ENCODE measurements at regions of chr6 and their contacts with region 1.

Region 1: GRCh38 chr6:136643850-136644596 is 93.8 kb upstream of the MAP7 start:
- DNase-seq: peak; percentile 94
- H3K4me3 Mint-ChIP-seq: no peak overlapping the region
- H3K27ac Mint-ChIP-seq: peak overlapping the region; percentile 16
- H3K4me1 Mint-ChIP-seq: peaks cover 6% of the 10 kb centered on the region
- H3K27me3 Mint-ChIP-seq: no peaks in the 10 kb centered on the region
- CTCF ChIP-seq: peak; percentile 73

Region 2: GRCh38 chr6:136607932-136608772 is 35.9 kb before region 1 on chr6:
- CTCF ChIA-PET with region 1: interaction called, 15 read pairs
- POLR2A ChIA-PET with region 1: interaction called, 3 read pairs
- intact Hi-C with region 1: loop called (anchors 1 kb)
- DNase-seq: peak; percentile 91
- H3K4me3 Mint-ChIP-seq: peak overlapping the region; percentile 11
- H3K27ac Mint-ChIP-seq: peak overlapping the region; percentile 94
- H3K4me1 Mint-ChIP-seq: peaks cover 37% of the 10 kb centered on the region
- H3K27me3 Mint-ChIP-seq: no peaks in the 10 kb centered on the region
- CTCF ChIP-seq: peak; percentile 67

Region 3: GRCh38 chr6:136657666-136658065 is 13.6 kb after region 1 on chr6:
- CTCF ChIA-PET with region 1: interaction called, 13 read pairs
- POLR2A ChIA-PET with region 1: interaction called, 7 read pairs
- intact Hi-C with region 1: no loop called
- DNase-seq: no peak
- H3K4me3 Mint-ChIP-seq: no peak overlapping the region
- H3K27ac Mint-ChIP-seq: no peak overlapping the region
- H3K4me1 Mint-ChIP-seq: peaks cover 12% of the 10 kb centered on the region
- H3K27me3 Mint-ChIP-seq: no peaks in the 10 kb centered on the region
- CTCF ChIP-seq: no peak

Region 4: GRCh38 chr6:136685540-136686108 is 41.6 kb after region 1 on chr6:
- CTCF ChIA-PET with region 1: interaction called, 11 read pairs
- POLR2A ChIA-PET with region 1: interaction called, 6 read pairs
- intact Hi-C with region 1: no loop called
- DNase-seq: peak; percentile 82
- H3K4me3 Mint-ChIP-seq: no peak overlapping the region
- H3K27ac Mint-ChIP-seq: no peak overlapping the region
- H3K4me1 Mint-ChIP-seq: peaks cover 13% of the 10 kb centered on the region
- H3K27me3 Mint-ChIP-seq: no peaks in the 10 kb centered on the region
- CTCF ChIP-seq: no peak

Region 5: DNA sequence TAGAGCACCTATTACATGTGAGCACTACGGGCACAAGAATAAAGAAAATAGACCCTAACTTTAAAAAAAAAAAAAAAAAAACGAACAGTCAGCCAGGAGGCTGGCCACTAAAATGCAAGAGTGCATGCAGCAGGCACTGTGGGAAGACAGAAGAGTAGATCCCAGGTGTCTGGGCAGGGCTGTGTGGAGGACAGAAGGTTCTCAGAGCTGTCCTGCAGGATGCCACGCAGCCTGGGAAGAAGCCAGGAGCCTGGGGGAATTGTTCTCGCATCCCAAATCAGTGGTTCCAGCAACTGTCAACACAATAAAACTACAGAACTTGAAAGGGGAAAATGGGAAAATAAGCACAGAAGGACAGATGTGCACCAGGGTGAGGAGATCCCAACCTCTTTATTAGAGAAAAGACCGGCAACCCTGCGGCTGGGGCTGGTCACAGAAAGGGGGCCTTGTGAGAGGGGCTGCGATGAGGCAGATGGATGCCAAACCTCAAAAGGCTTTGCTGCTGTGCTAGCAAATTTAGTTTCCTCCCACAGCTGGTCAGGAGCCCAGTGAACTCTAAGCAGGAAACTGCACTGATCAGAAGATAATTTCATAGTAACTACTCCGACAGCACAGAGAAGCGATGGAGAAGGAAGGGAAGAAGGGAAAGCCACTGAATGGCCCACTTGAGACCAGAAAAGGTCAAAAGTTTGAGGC is 117.4 kb after region 1 on chr6:
- CTCF ChIA-PET with region 1: interaction called, 11 read pairs
- POLR2A ChIA-PET with region 1: no interaction called
- intact Hi-C with region 1: no loop called
- DNase-seq: no peak
- H3K4me3 Mint-ChIP-seq: peak overlapping the region; percentile 17
- H3K27ac Mint-ChIP-seq: peak overlapping the region; percentile 32
- H3K4me1 Mint-ChIP-seq: peaks cover 19% of the 10 kb centered on the region
- H3K27me3 Mint-ChIP-seq: no peaks in the 10 kb centered on the region
- CTCF ChIP-seq: no peak

Region 6: GRCh38 chr6:137013738-137014602 is 369.9 kb after region 1 on chr6:
- CTCF ChIA-PET with region 1: interaction called, 7 read pairs
- POLR2A ChIA-PET with region 1: interaction called, 9 read pairs
- intact Hi-C with region 1: loop called (anchors 1 kb)
- DNase-seq: peak; percentile 81
- H3K4me3 Mint-ChIP-seq: no peak overlapping the region
- H3K27ac Mint-ChIP-seq: peak overlapping the region; percentile 17
- H3K4me1 Mint-ChIP-seq: peaks cover 14% of the 10 kb centered on the region
- H3K27me3 Mint-ChIP-seq: no peaks in the 10 kb centered on the region
- CTCF ChIP-seq: peak; percentile 67